SK-N-SH (cell line): ENCODE measurements at regions of chr1 and their contacts with region 1.

Region 1: DNA sequence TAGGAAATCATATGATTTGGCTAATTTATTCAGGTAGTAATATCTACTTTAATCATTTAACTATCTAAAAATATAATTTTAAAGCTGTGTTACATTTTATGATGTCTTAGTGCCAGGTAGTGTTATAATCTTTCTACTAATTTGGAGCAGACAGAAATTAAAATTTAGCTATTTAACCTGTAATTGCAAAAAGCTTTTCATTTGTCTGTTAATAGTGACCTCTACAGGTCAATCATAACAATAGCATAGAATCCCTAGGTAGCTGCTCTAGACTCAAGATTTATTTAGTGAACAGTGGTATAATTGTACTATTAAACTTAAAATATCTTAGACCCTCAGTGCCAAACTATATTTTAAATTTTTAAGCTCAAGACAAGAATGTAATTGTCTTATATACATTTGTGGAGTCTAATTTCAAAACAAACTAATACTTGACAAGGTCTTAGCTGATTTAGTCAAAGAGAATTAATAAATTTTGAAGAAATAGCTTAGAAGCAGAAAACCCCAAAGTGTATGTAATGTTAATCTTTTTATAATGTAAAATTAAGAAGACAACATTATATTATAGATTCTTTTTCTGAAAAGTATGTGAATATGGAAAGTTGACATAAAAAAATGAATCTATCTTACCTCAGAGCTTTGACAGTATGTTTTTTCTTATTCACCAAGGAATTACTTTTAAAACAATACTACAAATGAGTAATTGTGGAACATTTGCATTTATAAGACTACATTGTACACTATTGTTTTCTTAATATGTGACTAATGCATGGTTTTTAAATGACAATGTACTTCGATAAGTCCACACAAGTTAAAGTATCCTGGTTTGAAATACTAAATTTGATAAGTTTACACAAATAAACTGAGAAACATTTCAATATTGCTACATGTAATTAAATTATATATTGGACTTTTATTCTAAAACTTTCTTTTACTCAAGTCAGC is 64.1 kb upstream of the RNPC3 start:
- DNase-seq: peak; percentile 21
- H3K4me3 ChIP-seq: no peak overlapping the region; a peak in 1 of 4 replicates
- H3K27ac ChIP-seq: no peak overlapping the region
- H3K4me1 ChIP-seq: no peaks in the 10 kb centered on the region
- H3K27me3 ChIP-seq: no peaks in the 10 kb centered on the region
- CTCF ChIP-seq: peak; percentile 85
- EP300 ChIP-seq: no peak
- RAD21 ChIP-seq: peak; percentile 85

Region 2: DNA sequence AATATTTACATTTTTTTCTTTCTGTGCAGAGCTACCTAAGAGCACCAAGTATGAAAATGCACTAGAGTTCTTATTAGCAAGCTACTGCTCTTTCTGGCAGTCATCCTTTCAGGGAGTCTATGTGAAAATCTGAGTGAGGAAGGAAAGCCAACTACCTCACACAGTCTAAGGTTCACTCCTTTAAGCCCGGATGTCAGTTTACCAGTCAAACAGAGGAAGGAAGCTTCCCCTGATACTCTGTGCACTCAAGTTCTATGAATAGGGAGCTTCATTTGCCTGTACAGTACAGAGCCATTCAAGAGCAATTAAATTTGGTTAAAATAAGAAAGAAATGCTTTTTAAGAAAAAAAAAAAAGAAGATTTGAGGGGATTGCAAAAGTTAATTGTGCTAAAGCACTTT is 360.0 kb before region 1 on chr1:
- CTCF ChIA-PET with region 1: interaction called, 119 read pairs
- POLR2A ChIA-PET with region 1: no interaction called
- DNase-seq: no peak
- H3K4me3 ChIP-seq: no peak overlapping the region
- H3K27ac ChIP-seq: no peak overlapping the region
- H3K4me1 ChIP-seq: no peaks in the 10 kb centered on the region; a peak in 1 of 4 replicates
- H3K27me3 ChIP-seq: no peaks in the 10 kb centered on the region
- CTCF ChIP-seq: no peak
- EP300 ChIP-seq: no peak
- RAD21 ChIP-seq: no peak

Region 3: DNA sequence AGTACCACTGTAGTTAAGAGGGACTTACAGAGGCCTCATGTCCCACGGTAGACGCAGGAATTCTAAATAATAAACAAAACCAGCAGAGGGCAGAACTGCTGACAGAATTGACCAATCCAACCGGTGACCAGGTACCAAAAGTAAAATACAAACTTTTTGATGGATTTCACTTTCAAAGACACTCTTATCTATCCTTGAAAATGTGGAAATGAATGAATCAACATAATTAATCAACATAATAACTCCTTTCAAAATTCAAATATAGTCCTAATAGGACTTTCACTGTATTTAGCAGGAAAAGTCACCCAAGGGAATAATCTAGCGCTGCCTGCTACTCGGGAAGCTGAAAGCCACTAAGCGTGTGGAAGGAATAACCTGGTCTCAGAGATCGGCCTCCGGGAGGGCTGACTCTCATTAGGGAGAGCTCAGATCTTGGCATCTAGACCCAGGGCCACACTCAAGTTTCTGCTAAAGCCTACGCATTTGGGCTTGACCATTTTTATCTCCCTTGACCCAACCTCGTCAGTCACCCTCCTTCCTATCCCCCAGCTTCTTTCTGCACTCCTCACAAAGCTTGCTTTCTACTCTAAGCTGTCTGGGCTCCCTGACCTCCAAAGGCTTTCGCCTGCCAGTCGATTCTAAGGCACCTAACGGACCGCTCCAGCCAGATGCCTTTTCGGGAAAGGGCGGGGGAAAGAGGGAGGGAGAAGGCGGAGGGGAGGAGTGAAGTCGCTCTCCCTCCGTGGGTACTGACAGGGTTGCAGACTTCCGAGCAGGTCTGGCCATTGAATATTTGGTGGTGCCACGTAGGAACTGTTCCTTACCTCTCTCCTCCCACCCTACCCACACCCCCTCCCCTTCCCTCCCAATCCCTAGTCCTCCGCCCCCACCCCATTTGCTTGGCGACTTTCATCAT is 354.7 kb before region 1 on chr1:
- CTCF ChIA-PET with region 1: interaction called, 119 read pairs
- POLR2A ChIA-PET with region 1: no interaction called
- DNase-seq: peak; percentile 62
- H3K4me3 ChIP-seq: peak overlapping the region; percentile 48 to 68
- H3K27ac ChIP-seq: peak overlapping the region in 1 of 2 experiments; percentile 38; a peak in 3 of 4 replicates
- H3K4me1 ChIP-seq: peaks cover 2 to 5% of the 10 kb centered on the region in 2 experiments; a peak in 3 of 4 replicates
- H3K27me3 ChIP-seq: no peaks in the 10 kb centered on the region
- CTCF ChIP-seq: peak; percentile 76
- EP300 ChIP-seq: no peak
- RAD21 ChIP-seq: peak; percentile 70

Region 4: GRCh38 chr1:103120981-103121380 is 340.5 kb before region 1 on chr1:
- CTCF ChIA-PET with region 1: interaction called, 15 read pairs
- POLR2A ChIA-PET with region 1: no interaction called
- DNase-seq: no peak
- H3K4me3 ChIP-seq: no peak overlapping the region
- H3K27ac ChIP-seq: no peak overlapping the region
- H3K4me1 ChIP-seq: no peaks in the 10 kb centered on the region
- H3K27me3 ChIP-seq: no peaks in the 10 kb centered on the region
- CTCF ChIP-seq: no peak
- EP300 ChIP-seq: no peak
- RAD21 ChIP-seq: no peak

Region 5: GRCh38 chr1:103256490-103256889 is 204.9 kb before region 1 on chr1:
- CTCF ChIA-PET with region 1: no interaction called
- POLR2A ChIA-PET with region 1: no interaction called
- DNase-seq: no peak
- H3K4me3 ChIP-seq: no peak overlapping the region
- H3K27ac ChIP-seq: no peak overlapping the region
- H3K4me1 ChIP-seq: peaks cover 0 to 6% of the 10 kb centered on the region in 2 experiments; a peak in 2 of 4 replicates
- H3K27me3 ChIP-seq: no peaks in the 10 kb centered on the region
- CTCF ChIP-seq: no peak
- EP300 ChIP-seq: no peak
- RAD21 ChIP-seq: no peak

Region 6: DNA sequence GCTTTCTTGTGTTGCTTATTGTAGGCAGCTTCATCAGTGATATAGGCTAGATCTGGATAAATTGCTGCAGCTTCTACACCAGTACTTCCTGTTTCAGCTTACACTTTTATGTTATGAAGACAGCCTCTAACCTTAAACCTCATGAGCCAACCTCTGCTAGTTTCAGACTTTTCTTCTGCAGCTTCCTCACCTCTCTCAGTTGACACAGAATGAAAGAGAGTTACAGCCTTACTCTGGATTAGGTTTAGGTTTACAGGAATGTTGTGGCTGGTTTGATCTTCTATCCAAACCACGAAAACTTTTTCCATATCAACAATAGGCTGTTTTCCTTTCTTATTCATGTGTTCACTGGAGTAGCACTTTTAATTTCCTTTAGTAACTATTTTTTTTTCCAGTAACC is 12.9 kb before region 1 on chr1:
- CTCF ChIA-PET with region 1: interaction called, 10 read pairs
- POLR2A ChIA-PET with region 1: no interaction called
- DNase-seq: no peak
- H3K4me3 ChIP-seq: no peak overlapping the region
- H3K27ac ChIP-seq: no peak overlapping the region
- H3K4me1 ChIP-seq: no peaks in the 10 kb centered on the region
- H3K27me3 ChIP-seq: no peaks in the 10 kb centered on the region
- CTCF ChIP-seq: no peak
- EP300 ChIP-seq: no peak
- RAD21 ChIP-seq: no peak

Region 7: GRCh38 chr1:103477101-103477500 is 15.7 kb after region 1 on chr1:
- CTCF ChIA-PET with region 1: interaction called, 12 read pairs
- POLR2A ChIA-PET with region 1: no interaction called
- DNase-seq: no peak
- H3K4me3 ChIP-seq: no peak overlapping the region
- H3K27ac ChIP-seq: no peak overlapping the region
- H3K4me1 ChIP-seq: no peaks in the 10 kb centered on the region; a peak in 1 of 4 replicates
- H3K27me3 ChIP-seq: no peaks in the 10 kb centered on the region
- CTCF ChIP-seq: no peak
- EP300 ChIP-seq: no peak
- RAD21 ChIP-seq: no peak

Region 8: GRCh38 chr1:103514920-103515503 is 53.6 kb after region 1 on chr1:
- CTCF ChIA-PET with region 1: interaction called, 10 read pairs
- POLR2A ChIA-PET with region 1: no interaction called
- DNase-seq: peak; percentile 9
- H3K4me3 ChIP-seq: no peak overlapping the region; a peak in 1 of 4 replicates
- H3K27ac ChIP-seq: no peak overlapping the region
- H3K4me1 ChIP-seq: peaks cover 0 to 6% of the 10 kb centered on the region in 2 experiments; a peak in 1 of 4 replicates
- H3K27me3 ChIP-seq: no peaks in the 10 kb centered on the region
- CTCF ChIP-seq: peak; percentile 86
- EP300 ChIP-seq: no peak
- RAD21 ChIP-seq: peak; percentile 93

Region 9: DNA sequence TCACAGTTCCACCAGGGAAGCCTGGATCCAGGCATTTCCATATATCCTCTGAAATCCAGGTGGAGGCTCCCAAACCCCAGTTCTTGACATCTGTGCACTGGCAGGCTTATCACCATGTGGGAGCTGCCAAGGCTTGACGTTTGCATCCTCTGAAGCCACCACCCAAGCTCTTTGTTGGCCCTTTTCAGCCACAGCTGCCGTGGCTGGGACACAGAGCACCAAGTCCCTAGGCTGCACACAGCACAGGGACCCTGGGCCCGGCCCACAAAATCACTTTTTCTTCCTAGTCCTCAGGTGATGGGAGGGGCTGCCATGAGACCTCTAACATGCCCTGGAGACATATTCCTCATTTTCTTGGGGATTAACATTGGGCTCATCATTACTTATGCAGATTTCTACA is 86.4 kb after region 1 on chr1:
- CTCF ChIA-PET with region 1: no interaction called
- POLR2A ChIA-PET with region 1: no interaction called
- DNase-seq: no peak
- H3K4me3 ChIP-seq: no peak overlapping the region
- H3K27ac ChIP-seq: no peak overlapping the region
- H3K4me1 ChIP-seq: no peaks in the 10 kb centered on the region
- H3K27me3 ChIP-seq: no peaks in the 10 kb centered on the region
- CTCF ChIP-seq: no peak
- EP300 ChIP-seq: no peak
- RAD21 ChIP-seq: no peak